ENCODE measurements at regions of chr3 and their contacts with region 1.

Region 1: GRCh38 chr3:63818281-63819150 is 583 bp upstream of the C3orf49 start:
- DNase-seq: peak; percentile 47
- CTCF ChIP-seq: peak; percentile 83

Region 2: DNA sequence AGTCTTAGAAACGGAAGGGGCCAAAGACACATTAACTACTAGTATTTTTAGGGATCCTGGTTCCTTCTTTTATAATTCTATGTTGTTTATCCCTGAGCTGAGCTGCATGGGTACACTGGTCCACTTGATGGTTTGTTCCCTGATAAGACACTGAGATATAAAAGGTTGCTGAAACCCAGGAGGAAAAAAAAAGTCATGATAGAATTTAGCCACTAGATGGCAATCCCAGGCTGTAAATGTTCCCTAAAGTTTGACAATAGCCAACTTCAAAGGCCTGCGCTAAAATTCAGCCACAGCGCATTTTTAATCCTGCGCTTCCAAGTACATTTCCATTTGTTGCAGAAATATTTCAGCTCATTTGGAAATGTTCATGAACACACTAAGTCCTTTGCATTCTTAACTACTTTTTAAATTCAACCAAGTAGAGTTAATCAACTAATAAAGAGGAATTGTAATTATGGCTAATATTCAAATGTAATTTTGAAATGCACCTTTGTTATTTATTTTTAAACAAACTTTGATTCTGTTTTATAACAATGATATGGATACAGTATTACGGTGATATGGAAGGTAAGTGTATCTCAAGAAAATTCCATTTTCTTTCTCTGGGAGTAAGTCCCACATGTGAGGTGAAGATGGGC is 1195.8 kb before region 1 on chr3:
- CTCF ChIA-PET with region 1: interaction called, 25 read pairs
- POLR2A ChIA-PET with region 1: no interaction called
- DNase-seq: peak; percentile 21
- CTCF ChIP-seq: peak; percentile 29

Region 3: DNA sequence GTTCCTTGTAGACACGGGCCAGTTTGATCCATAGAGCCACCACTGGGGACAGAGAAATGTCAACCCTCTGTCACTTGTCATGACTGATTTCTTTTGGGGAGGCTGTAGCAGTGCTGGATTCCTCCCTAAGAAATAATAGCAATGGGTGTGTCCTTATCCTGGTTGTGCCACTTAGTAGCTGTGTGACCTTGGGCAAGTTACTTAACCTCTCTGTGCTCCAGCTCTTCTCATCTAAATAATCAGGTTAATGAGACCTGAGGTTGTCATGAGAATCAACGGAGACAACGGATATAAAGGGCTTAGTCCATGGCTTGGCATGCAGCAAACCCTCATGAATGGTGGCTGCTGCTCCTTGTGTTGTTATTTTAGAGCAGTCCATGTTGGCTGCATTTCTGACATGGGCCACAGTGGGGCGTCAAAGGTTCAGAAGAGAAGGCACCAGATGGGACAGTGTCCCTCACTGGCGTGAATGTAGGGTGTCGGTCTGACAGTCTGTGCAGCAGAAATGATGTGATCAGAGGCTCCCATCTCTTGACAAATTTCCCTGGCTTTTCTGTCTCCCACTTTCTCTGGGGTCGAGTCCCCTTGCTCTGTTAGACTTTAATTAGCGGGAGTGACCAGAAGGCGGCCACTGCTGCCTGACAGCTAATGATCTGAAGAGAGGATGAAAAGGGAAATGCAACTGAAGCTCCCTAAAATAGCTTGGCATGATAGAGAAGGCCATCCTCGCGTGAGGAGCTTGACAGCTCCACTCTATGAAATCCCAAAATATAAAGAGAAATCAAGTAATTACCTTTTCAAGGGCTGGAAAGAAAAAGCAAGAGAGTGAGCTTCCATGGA is 1152.7 kb before region 1 on chr3:
- CTCF ChIA-PET with region 1: interaction called, 10 read pairs
- POLR2A ChIA-PET with region 1: no interaction called
- DNase-seq: peak; percentile 24
- CTCF ChIP-seq: peak; percentile 47

Region 4: GRCh38 chr3:63832395-63832794 is 13.9 kb after region 1 on chr3:
- CTCF ChIA-PET with region 1: interaction called, 38 read pairs
- POLR2A ChIA-PET with region 1: no interaction called
- DNase-seq: no peak
- CTCF ChIP-seq: no peak

Region 5: DNA sequence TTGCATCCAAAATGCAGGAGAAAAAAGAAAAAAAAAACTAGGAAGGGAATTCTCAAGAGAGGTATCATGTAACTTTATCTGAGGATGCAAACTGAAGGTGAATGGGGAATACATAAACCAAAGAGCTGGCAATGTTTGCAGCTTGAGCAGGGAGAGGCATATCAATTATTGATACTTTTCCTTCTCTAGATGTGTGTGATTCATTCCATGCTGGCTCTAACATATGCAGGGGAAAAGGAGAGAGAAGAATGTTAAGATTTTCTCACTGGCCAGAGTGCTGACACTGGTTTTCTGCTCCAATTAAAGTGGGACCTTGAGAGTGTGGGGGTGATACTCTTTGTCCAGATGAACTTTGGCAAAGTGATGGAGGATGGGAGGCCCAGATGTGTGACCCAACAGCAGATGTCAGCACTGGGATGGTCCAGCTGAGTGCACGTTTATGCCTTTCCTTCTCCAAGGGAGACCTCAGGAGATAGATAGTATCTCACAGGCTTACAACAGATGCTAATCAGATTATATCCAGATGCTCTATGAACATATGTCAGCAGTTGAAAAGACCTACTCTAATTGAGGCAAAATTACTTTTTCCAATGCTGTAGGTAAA is 254.7 kb after region 1 on chr3:
- CTCF ChIA-PET with region 1: no interaction called
- POLR2A ChIA-PET with region 1: no interaction called
- DNase-seq: no peak
- CTCF ChIP-seq: no peak

Measured in GM10248 (cell line).